ENCODE measurements at regions of chr10 and their contacts with region 1.

Region 1: DNA sequence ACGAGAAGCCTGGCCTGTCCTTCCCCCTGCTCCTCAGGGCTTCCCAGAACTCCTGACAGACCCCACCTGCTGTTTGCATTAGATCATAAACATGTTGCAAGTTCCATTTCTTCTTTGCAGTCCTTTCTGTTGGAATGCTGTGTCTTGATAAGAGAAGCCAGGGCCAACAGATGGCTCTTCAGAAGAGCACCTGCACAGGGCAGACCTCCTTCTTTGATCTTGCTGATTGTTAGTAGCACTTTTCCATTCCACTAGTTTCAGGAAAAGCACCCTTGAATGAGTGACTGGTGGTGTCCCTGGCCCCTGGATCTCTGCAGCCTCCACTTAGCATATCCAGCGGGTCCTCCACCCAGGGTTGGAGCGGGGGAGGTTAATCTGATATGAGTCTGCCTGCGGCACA is 243.2 kb downstream of the GFRA1 start:
- DNase-seq: peak; percentile 71 to 79
- H3K4me3 ChIP-seq: no peak overlapping the region
- H3K4me3 Mint-ChIP-seq: peak overlapping the region; percentile 40
- H3K27ac Mint-ChIP-seq: peak overlapping the region; percentile 99
- H3K4me1 ChIP-seq: peaks cover 18% of the 10 kb centered on the region
- H3K4me1 Mint-ChIP-seq: peaks cover 22% of the 10 kb centered on the region
- H3K27me3 ChIP-seq: no peaks in the 10 kb centered on the region
- H3K27me3 Mint-ChIP-seq: no peaks in the 10 kb centered on the region
- CTCF ChIP-seq: no peak

Region 2: GRCh38 chr10:116001262-116001857 is 28.5 kb before region 1 on chr10:
- CTCF ChIA-PET with region 1: no interaction called
- POLR2A ChIA-PET with region 1: no interaction called
- intact Hi-C with region 1: no loop called
- DNase-seq: no peak
- H3K4me3 ChIP-seq: no peak overlapping the region
- H3K4me3 Mint-ChIP-seq: no peak overlapping the region
- H3K27ac Mint-ChIP-seq: no peak overlapping the region
- H3K4me1 ChIP-seq: peaks cover 16% of the 10 kb centered on the region
- H3K4me1 Mint-ChIP-seq: peaks cover 9% of the 10 kb centered on the region
- H3K27me3 ChIP-seq: no peaks in the 10 kb centered on the region
- H3K27me3 Mint-ChIP-seq: no peaks in the 10 kb centered on the region
- CTCF ChIP-seq: no peak

Region 3: DNA sequence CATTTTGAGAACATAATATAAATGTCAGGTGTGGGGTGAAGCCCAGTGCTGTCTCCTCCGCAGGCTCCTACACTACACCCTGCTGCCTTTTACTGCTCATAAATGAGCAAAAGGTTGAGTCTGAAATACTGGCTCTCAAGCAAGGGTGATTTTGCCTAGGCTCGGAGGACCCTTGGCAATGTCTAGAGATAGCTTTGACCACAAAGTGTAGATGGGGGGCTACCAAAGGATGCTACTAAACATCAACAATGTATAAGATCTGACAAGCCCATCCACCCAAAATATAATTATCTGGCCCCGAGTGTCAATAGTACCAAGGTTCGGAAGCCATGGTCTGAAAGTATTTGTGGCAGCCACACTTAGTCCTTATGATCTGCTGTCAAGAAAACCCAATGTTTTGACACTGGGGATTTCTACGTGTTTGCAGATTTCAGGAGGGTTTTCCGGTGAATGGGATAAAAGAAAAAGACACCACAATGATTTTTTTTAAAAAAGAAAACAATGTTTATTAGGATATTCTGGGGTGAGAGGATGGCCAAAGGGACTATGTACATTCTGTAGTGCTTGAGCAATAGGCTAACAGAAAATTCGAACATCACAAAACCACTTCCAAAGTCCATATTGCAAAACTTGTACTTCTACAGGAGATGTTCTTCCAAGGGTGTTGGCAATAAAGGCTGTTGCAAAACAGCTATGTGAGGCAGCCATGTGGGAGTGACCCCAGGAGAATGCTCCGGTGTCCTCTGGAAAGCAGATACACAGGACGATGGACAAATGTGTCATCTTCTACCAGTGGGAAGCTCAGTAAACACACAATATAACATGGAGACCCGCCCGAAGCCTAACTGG is 26.8 kb after region 1 on chr10:
- CTCF ChIA-PET with region 1: no interaction called
- POLR2A ChIA-PET with region 1: no interaction called
- intact Hi-C with region 1: loop called (anchors 1 kb)
- DNase-seq: peak; percentile 81 to 85
- H3K4me3 ChIP-seq: no peak overlapping the region
- H3K4me3 Mint-ChIP-seq: peak overlapping the region; percentile 36
- H3K27ac Mint-ChIP-seq: peak overlapping the region; percentile 85
- H3K4me1 ChIP-seq: peaks cover 32% of the 10 kb centered on the region
- H3K4me1 Mint-ChIP-seq: peaks cover 19% of the 10 kb centered on the region
- H3K27me3 ChIP-seq: no peaks in the 10 kb centered on the region
- H3K27me3 Mint-ChIP-seq: no peaks in the 10 kb centered on the region
- CTCF ChIP-seq: no peak

Measured in Caco-2 (cell line).